ENCODE measurements at regions of chr7 and their contacts with region 1.

Region 1: DNA sequence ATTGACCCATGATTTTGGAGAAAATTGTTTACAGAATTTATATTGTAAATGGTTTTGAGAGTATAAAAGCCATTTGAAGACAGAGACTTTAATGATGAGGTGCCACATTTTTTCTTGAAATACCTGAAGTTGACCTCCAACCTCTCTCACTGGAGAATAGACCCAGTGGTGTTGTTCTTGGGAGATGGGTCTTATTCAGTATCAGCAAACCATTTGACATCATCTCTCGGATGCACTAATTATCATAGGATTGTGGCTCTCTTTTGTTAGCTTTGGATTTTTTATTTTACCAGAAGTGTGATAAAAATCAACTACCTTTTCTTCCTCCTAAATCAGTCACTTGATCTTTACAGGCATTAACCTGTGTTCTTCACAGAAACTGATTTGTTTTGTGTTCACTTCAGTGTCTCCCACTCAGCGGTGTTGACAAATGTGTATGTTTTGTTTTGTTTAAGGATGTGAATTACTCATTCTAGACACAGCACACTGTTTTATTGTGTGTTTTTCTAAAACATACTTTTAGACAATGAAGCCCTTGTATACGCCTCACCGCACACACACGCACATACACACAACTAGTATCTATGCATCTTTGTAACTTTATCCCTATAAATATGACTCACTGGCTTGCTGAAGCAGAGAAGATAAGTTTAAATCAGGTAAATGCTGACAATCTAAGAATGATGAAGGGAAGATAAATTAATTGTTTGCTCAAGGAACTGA is 455.6 kb downstream of the INHBA start:
- DNase-seq: peak; percentile 60 to 99
- H3K4me3 ChIP-seq: no peak overlapping the region
- H3K27ac ChIP-seq: peak overlapping the region; percentile 70
- H3K4me1 ChIP-seq: peaks cover 32% of the 10 kb centered on the region
- H3K27me3 ChIP-seq: no peaks in the 10 kb centered on the region
- CTCF ChIP-seq: no peak

Region 2: GRCh38 chr7:41107668-41108448 is 139.4 kb before region 1 on chr7:
- CTCF ChIA-PET with region 1: no interaction called
- POLR2A ChIA-PET with region 1: no interaction called
- intact Hi-C with region 1: loop called (anchors 1 kb)
- DNase-seq: peak; percentile 92 to 100
- H3K4me3 ChIP-seq: peak overlapping the region; percentile 45; the same call in 1 of the 2 replicates
- H3K27ac ChIP-seq: peak overlapping the region; percentile 93
- H3K4me1 ChIP-seq: peaks cover 64% of the 10 kb centered on the region
- H3K27me3 ChIP-seq: no peaks in the 10 kb centered on the region
- CTCF ChIP-seq: no peak

Region 3: GRCh38 chr7:41148521-41148951 is 98.8 kb before region 1 on chr7:
- CTCF ChIA-PET with region 1: no interaction called
- POLR2A ChIA-PET with region 1: no interaction called
- intact Hi-C with region 1: loop called (anchors 5 kb)
- DNase-seq: peak; percentile 34 to 100
- H3K4me3 ChIP-seq: no peak overlapping the region; the same call in 1 of the 2 replicates
- H3K27ac ChIP-seq: peak overlapping the region; percentile 66
- H3K4me1 ChIP-seq: peaks cover 26% of the 10 kb centered on the region
- H3K27me3 ChIP-seq: no peaks in the 10 kb centered on the region
- CTCF ChIP-seq: no peak

Region 4: DNA sequence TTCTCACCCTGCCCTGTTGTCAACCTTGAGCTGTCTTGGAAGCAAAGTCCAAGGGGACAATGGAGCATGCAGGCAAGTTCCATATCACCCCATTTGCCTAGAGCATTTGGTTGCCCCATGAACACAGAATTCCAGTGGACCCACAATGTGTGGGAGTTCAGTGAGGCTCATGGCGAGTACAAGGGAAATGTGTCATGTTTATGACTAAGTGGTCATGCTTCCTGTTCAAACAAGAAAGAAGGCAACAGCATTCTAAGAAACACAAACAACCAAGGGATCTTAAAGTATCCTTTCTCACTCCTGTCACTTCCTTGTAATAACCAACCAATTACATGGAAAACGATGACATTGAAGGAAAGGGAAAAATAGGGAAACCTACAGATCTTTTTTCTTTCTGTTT is 57.4 kb before region 1 on chr7:
- CTCF ChIA-PET with region 1: no interaction called
- POLR2A ChIA-PET with region 1: no interaction called
- intact Hi-C with region 1: loop called (anchors 1 kb)
- DNase-seq: peak; percentile 61 to 99
- H3K4me3 ChIP-seq: no peak overlapping the region
- H3K27ac ChIP-seq: peak overlapping the region; percentile 93
- H3K4me1 ChIP-seq: peaks cover 46% of the 10 kb centered on the region
- H3K27me3 ChIP-seq: no peaks in the 10 kb centered on the region
- CTCF ChIP-seq: no peak

Region 5: DNA sequence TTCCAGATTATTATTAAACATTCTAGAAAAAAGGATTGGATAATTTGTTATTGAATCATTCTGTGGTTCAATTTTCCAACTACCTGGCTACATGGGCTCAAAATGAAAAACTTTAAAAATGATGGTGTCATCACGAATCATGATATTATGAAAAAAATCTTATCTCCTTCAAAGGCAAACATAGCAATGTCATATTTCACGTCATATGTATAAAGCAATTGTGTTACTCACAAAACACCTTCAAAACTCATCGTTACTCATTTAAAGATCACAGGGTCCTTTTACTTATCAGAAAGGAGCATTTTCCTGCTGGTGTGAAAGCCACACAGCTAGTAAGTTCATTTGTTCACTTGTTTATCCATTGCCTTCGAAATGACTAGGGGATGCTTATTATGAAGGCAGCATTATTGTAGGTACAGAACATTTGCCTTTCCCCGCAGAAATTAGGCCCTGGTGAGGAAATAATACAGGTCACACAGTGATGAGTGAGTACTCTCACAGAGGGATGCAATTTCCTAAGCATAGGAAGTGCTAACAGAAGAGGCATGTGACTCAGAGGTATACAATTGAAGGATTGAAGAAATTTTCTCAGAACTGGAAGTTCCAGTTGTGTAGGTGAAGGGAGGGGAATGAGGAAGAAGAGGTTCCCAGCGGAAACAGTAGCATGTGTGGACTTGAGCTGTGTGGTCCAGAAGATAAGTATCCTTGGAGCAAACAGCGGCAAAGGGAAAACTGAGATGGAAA is 23.1 kb before region 1 on chr7:
- CTCF ChIA-PET with region 1: no interaction called
- POLR2A ChIA-PET with region 1: no interaction called
- intact Hi-C with region 1: loop called (anchors 1 kb)
- DNase-seq: peak; percentile 54 to 100
- H3K4me3 ChIP-seq: no peak overlapping the region
- H3K27ac ChIP-seq: peak overlapping the region; percentile 73
- H3K4me1 ChIP-seq: peaks cover 23% of the 10 kb centered on the region
- H3K27me3 ChIP-seq: no peaks in the 10 kb centered on the region
- CTCF ChIP-seq: no peak

Region 6: GRCh38 chr7:41573018-41573417 is 325.7 kb after region 1 on chr7:
- CTCF ChIA-PET with region 1: no interaction called
- POLR2A ChIA-PET with region 1: no interaction called
- intact Hi-C with region 1: loop called (anchors 1 kb)
- DNase-seq: peak; percentile 56 to 88
- H3K4me3 ChIP-seq: 0 out of 2 replicates have a peak overlapping the region, but pooled peaks have one; percentile 18
- H3K27ac ChIP-seq: peak overlapping the region; percentile 89
- H3K4me1 ChIP-seq: peaks cover 38% of the 10 kb centered on the region
- H3K27me3 ChIP-seq: no peaks in the 10 kb centered on the region
- CTCF ChIP-seq: no peak

Region 7: DNA sequence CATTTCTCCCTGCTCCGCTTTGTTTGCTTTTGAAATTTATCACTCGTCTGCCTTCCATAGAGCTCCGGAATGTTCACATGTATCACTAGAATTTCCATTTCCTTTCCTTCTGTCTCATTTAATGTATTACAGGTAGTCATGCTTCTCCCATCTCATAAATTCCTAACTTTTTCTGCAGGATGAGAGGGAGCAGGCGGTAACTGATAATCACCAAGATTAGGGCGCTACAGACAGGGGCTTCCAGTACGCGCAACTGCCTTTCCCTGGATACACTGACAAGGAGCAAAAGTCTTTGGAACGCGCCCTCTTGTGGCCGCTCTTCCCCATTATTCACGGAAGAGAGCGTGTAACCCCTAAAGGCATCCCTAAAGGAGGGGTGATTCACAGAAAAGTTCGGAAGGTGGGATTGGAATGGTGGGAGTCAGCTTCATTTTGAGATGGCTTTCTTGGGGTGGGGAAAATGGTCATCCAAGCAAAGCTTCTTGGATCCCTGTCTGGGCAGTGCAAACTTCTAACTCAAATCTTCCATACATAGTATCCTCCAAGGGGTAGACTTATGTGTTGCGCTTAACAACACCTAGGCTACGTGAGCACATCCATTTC is 449.1 kb after region 1 on chr7:
- CTCF ChIA-PET with region 1: no interaction called
- POLR2A ChIA-PET with region 1: no interaction called
- intact Hi-C with region 1: loop called (anchors 1 kb)
- DNase-seq: peak; percentile 68 to 80
- H3K4me3 ChIP-seq: peak overlapping the region; percentile 19; the same call in 1 of the 2 replicates
- H3K27ac ChIP-seq: no peak overlapping the region
- H3K4me1 ChIP-seq: peaks cover 24% of the 10 kb centered on the region
- H3K27me3 ChIP-seq: no peaks in the 10 kb centered on the region
- CTCF ChIP-seq: peak; percentile 75